HCT116 (cell line): ENCODE measurements at regions of chr11 and their contacts with region 1.

Region 1: DNA sequence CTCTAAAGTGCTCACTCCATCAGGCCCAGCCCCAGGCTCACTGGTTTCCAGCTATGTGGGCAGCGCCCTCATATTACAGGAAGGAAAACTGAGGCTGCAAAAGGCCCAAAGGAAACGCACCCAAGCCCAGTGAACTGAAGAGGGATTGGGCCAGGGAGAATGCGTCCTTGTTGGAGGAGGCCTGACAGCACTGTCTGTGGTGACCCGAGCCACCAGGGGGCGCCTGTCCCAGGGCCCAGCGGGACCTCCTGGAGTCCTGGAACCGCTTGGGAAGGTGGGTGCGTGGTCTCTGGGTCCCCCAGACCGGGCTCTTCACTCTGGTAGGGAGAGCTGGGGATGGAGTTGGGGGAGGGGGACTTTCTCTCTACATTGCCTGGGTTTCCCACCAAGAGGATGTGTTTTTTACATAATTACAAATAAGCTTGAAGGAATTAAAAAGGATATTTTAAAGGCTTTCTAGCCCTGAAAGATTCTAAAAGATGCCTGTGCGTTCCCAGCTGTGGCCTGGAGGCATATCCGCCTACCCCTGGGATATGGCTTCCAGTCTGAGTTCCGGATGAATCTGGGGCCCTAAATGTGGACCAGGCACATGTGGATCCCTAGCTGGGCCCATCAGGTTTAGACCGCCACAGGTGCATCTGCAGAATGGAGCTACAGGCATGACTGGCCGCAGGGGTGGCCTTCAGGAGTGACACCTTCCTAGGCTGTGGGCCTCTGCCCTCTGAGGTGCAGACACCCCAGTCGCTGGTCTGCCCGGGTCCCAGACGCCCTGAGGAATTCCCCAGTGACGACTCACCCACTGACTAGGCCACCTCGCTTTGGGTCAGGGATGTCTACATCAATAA is 4.2 kb downstream of the SPI1 start:
- DNase-seq: peak; percentile 60
- ATAC-seq: peak; percentile 94
- H3K4me3 ChIP-seq: no peak overlapping the region
- H3K27ac ChIP-seq: peak overlapping the region; percentile 31; the same call in 1 of the 2 replicates
- H3K4me1 ChIP-seq: peaks cover 11 to 29% of the 10 kb centered on the region in 2 experiments; a peak in 3 of 4 replicates
- H3K27me3 ChIP-seq: no peaks in the 10 kb centered on the region
- CTCF ChIP-seq: peak; percentile 88 to 99 (median 97)
- POLR2A ChIP-seq: no peak
- RAD21 ChIP-seq: peak; percentile 81

Region 2: DNA sequence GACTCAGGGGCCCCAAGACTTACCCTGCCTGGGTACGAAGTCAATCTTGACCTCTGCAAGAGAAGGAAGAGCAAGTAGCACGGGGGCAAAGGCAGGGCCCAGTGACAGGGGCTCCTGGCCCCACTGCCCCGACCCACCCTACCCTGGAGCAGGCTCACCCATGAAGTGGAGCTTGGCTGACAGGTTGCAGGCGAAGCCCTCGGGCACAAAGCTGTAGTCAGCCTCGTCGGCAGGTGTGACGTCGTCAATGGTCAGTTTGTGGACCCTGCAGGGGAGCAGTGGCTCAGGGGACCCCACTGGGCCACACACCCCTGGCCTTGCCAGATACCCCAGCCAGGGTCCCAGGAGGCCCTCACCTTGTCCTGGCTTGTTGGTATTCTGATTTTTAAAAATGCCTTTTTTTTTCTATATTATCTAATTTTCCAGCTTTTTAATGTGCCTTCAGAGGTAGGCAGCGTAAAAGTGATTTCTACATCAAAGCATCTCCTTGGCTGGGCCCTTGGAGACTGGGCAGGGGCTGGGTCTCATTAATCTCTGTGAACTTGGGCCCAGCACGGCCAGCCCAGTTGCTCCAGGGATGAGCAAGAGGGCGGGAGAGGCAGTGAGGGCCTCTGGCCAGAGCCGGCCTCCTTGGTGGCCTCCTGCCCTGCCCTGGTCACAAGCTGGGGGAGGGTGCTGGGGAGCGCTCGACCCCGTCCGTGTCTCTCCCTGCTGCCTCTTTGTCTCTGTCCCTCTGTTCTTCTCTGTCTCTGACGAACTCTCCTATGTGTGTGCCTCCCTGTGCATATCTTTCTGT is 32.9 kb before region 1 on chr11:
- CTCF ChIA-PET with region 1: no interaction called
- POLR2A ChIA-PET with region 1: no interaction called
- RAD21 ChIA-PET with region 1: no interaction called
- intact Hi-C with region 1: no loop called
- DNase-seq: no peak
- ATAC-seq: no peak
- H3K4me3 ChIP-seq: no peak overlapping the region
- H3K27ac ChIP-seq: no peak overlapping the region
- H3K4me1 ChIP-seq: peaks cover 6 to 14% of the 10 kb centered on the region in 2 experiments; a peak in 3 of 4 replicates
- H3K27me3 ChIP-seq: no peaks in the 10 kb centered on the region
- CTCF ChIP-seq: no peak
- POLR2A ChIP-seq: no peak
- RAD21 ChIP-seq: no peak

Region 3: DNA sequence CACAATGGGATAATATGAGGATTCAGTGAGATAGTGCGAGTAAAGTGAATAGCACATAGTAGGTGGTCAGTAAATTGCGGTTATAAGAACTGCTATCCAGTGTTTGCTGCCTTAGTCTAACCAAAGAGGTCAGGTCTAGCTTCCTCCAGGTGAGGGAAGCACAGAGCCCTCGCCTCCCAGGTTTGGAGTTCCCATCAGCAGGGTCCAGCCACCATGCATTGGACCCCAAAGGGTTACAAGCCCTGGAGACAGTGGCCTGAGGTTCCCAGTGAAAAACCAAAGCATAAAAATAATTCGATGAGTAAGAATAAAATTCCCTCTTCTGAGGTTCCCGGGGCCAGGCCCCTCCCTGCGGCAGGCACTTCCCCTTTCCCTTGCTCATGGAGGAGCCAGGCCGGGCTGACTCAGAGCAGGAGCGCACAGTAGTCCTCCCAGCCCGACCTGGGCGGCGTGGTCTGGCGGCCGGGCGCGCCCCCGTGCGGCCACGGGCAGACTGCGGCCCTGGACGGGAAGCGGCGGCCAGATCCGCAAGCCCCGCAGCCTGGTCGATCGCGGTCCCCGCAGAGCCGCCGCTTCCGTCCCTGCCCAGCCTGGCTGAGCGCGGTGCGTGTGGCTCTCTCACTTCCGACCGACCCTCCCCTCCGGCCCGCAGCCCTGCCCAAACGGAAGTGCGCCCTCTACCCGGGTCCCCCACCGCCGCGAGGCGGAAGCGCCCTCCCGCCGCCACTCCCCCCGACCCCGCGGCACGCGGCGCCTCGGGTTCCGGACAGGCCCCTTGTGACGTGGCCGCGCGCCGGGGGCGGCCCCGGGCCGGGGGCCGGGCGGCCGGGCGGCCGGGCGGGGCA is 33.9 kb after region 1 on chr11 and contains the start of gene SLC39A13:
- CTCF ChIA-PET with region 1: interaction called, 8 read pairs
- POLR2A ChIA-PET with region 1: interaction called, 5 read pairs
- RAD21 ChIA-PET with region 1: no interaction called
- intact Hi-C with region 1: loop called (anchors 1 kb)
- DNase-seq: peak; percentile 81
- ATAC-seq: peak; percentile 88
- H3K4me3 ChIP-seq: peak within 1 kb of the TSS; percentile 78 to 87
- H3K27ac ChIP-seq: peak within 1 kb of the TSS; percentile 98
- H3K4me1 ChIP-seq: peaks cover 19 to 22% of the 10 kb centered on the region in 2 experiments
- H3K27me3 ChIP-seq: no peaks in the 10 kb centered on the region
- CTCF ChIP-seq: peak; percentile 50 to 75 (median 74); a peak in 5 of 6 replicates
- POLR2A ChIP-seq: peak; percentile 70
- RAD21 ChIP-seq: peak; percentile 67
- total RNA-seq, gene SLC39A13: 23.9 TPM

Region 4: GRCh38 chr11:47454180-47454644 is 80.1 kb after region 1 on chr11:
- CTCF ChIA-PET with region 1: interaction called, 9 read pairs
- POLR2A ChIA-PET with region 1: no interaction called
- RAD21 ChIA-PET with region 1: interaction called in 1 of 2 experiments, 3 read pairs
- intact Hi-C with region 1: loop called (anchors 1 kb)
- DNase-seq: peak; percentile 62
- ATAC-seq: peak; percentile 89
- H3K4me3 ChIP-seq: no peak overlapping the region
- H3K27ac ChIP-seq: no peak overlapping the region
- H3K4me1 ChIP-seq: peaks cover 0 to 2% of the 10 kb centered on the region in 2 experiments; a peak in 1 of 4 replicates
- H3K27me3 ChIP-seq: no peaks in the 10 kb centered on the region
- CTCF ChIP-seq: peak; percentile 76 to 86 (median 77); a peak in 5 of 6 replicates
- POLR2A ChIP-seq: no peak
- RAD21 ChIP-seq: peak; percentile 83

Region 5: GRCh38 chr11:47616726-47617416 is 242.8 kb after region 1 on chr11:
- CTCF ChIA-PET with region 1: interaction called, 5 read pairs
- POLR2A ChIA-PET with region 1: no interaction called
- RAD21 ChIA-PET with region 1: no interaction called
- intact Hi-C with region 1: loop called (anchors 5 kb)
- DNase-seq: peak; percentile 21
- ATAC-seq: peak; percentile 75
- H3K4me3 ChIP-seq: no peak overlapping the region
- H3K27ac ChIP-seq: no peak overlapping the region
- H3K4me1 ChIP-seq: no peaks in the 10 kb centered on the region
- H3K27me3 ChIP-seq: no peaks in the 10 kb centered on the region
- CTCF ChIP-seq: peak; percentile 61 to 69 (median 69); a peak in 5 of 6 replicates
- POLR2A ChIP-seq: no peak
- RAD21 ChIP-seq: peak; percentile 78

Region 6: DNA sequence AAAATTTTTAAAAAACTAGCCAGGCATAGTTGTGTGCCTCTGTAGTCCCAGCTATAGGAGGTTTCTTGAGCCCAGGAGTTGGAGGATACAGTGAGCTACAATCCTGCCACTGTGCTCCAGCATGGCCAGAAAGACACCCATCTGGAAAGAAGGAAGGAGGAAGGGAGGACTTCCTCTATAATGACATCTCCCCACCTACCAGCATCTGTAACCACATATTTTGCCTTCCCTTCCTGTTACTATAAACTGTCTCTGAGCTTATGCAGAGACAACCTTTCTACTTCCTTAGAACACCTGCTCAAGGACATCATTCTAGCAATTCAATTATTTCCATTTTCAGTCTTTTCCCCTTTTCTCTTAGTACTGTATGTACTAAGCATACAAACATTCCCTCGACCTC is 476.2 kb after region 1 on chr11:
- CTCF ChIA-PET with region 1: interaction called, 6 read pairs
- POLR2A ChIA-PET with region 1: no interaction called
- RAD21 ChIA-PET with region 1: no interaction called
- intact Hi-C with region 1: loop called (anchors 5 kb)
- DNase-seq: no peak
- ATAC-seq: no peak
- H3K4me3 ChIP-seq: no peak overlapping the region
- H3K27ac ChIP-seq: no peak overlapping the region
- H3K4me1 ChIP-seq: peaks cover 8 to 24% of the 10 kb centered on the region in 2 experiments; a peak in 3 of 4 replicates
- H3K27me3 ChIP-seq: no peaks in the 10 kb centered on the region
- CTCF ChIP-seq: no peak
- POLR2A ChIP-seq: no peak
- RAD21 ChIP-seq: no peak